ENCODE measurements at regions of chr11 and their contacts with region 1.

Region 1: GRCh38 chr11:59135648-59136461 is 6.8 kb upstream of the FAM111A start:
- DNase-seq: peak; percentile 90
- ATAC-seq: peak; percentile 99
- H3K4me3 ChIP-seq: peak overlapping the region in 1 of 5 experiments; percentile 18
- H3K4me3 Mint-ChIP-seq: peak overlapping the region; percentile 62
- H3K27ac ChIP-seq: no peak overlapping the region
- H3K27ac Mint-ChIP-seq: peak overlapping the region; percentile 88
- H3K4me1 ChIP-seq: peaks cover 14 to 23% of the 10 kb centered on the region in 2 donors
- H3K4me1 Mint-ChIP-seq: peaks cover 31% of the 10 kb centered on the region
- H3K27me3 ChIP-seq: no peaks in the 10 kb centered on the region
- H3K27me3 Mint-ChIP-seq: no peaks in the 10 kb centered on the region
- CTCF ChIP-seq: peak; percentile 98

Region 2: GRCh38 chr11:58567889-58568512 is 567.9 kb before region 1 on chr11:
- CTCF ChIA-PET with region 1: interaction called, 23 read pairs
- POLR2A ChIA-PET with region 1: no interaction called
- intact Hi-C with region 1: no loop called
- DNase-seq: peak; percentile 87
- ATAC-seq: peak; percentile 98
- H3K4me3 ChIP-seq: no peak overlapping the region
- H3K4me3 Mint-ChIP-seq: peak overlapping the region; percentile 1
- H3K27ac ChIP-seq: no peak overlapping the region
- H3K27ac Mint-ChIP-seq: peak overlapping the region; percentile 5
- H3K4me1 ChIP-seq: peaks cover 19 to 21% of the 10 kb centered on the region in 2 donors
- H3K4me1 Mint-ChIP-seq: peaks cover 42% of the 10 kb centered on the region
- H3K27me3 ChIP-seq: no peaks in the 10 kb centered on the region
- H3K27me3 Mint-ChIP-seq: no peaks in the 10 kb centered on the region
- CTCF ChIP-seq: peak; percentile 82

Region 3: DNA sequence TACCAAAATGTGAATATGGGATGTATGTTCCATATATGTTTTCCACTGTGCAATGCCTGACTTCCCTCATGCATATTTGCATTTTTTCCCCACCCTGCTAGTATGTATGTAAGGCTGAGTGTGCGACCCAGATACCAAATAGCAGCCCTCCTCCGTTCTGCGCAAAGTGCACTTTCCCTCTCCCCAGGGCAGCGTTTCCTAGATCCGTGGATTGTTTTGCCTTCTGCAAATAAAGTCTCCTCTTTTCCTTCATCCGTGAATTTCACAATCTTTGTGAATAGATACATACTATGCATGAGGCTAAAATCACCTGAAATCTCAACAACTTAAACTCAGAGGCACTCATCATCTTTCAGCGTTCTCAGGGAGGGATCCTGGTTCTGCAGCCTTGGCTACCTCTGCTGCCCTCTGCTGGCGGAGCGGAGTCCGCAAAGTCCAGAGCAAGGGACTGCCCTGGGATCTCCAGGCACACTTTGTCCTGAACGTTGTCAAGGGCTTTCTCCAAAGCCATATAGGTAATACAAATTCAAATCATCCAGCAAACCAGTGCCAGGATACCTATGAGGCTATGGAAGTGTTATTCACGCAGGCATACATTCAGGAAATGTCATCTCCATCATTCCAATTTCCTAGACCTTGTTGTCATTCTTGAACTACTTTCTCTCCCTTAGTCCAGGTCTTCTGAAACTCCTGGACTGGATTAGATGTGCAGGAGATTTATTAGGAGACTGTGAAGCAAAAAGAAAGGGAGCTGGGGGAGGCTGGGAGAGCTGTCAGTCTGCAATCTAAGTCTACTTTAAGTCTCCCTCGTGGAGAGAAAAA is 460.3 kb before region 1 on chr11:
- CTCF ChIA-PET with region 1: interaction called, 22 read pairs
- POLR2A ChIA-PET with region 1: no interaction called
- intact Hi-C with region 1: loop called (anchors 1 kb)
- DNase-seq: peak; percentile 74
- ATAC-seq: peak; percentile 73
- H3K4me3 ChIP-seq: no peak overlapping the region
- H3K4me3 Mint-ChIP-seq: no peak overlapping the region
- H3K27ac ChIP-seq: no peak overlapping the region
- H3K27ac Mint-ChIP-seq: no peak overlapping the region
- H3K4me1 ChIP-seq: no peaks in the 10 kb centered on the region
- H3K4me1 Mint-ChIP-seq: no peaks in the 10 kb centered on the region
- H3K27me3 ChIP-seq: peaks cover 0 to 16% (median 4%) of the 10 kb centered on the region in 4 experiments
- H3K27me3 Mint-ChIP-seq: peaks cover 12% of the 10 kb centered on the region
- CTCF ChIP-seq: peak; percentile 96

Region 4: DNA sequence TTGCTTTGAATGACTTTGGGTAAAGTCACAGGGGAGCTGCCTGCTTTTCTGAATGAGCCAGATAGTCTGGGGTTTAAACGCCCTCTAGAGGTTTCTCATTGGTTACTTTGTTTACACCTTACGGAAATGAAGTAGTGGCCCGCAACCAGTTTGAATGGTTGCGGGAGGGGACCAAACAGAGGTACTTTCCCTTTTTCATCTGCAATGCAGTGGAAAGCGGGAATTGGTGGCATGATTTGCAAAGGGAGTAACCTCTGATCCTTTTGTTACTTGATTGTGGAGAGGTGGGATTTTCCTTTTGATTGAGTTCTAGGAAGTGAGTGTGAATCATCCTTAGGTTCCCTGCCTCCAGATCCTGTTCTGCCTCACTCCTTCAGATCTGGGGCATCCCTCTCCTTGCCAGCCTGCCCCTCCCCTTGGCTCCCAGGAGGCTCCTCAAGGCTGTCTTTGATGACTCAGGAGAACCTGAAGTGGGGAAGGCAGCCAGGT is 212.5 kb before region 1 on chr11:
- CTCF ChIA-PET with region 1: interaction called, 11 read pairs
- POLR2A ChIA-PET with region 1: no interaction called
- intact Hi-C with region 1: no loop called
- DNase-seq: peak; percentile 51
- ATAC-seq: peak; percentile 76
- H3K4me3 ChIP-seq: no peak overlapping the region
- H3K4me3 Mint-ChIP-seq: peak overlapping the region; percentile 38
- H3K27ac ChIP-seq: no peak overlapping the region
- H3K27ac Mint-ChIP-seq: no peak overlapping the region
- H3K4me1 ChIP-seq: peaks cover 18 to 19% of the 10 kb centered on the region in 2 donors
- H3K4me1 Mint-ChIP-seq: peaks cover 22% of the 10 kb centered on the region
- H3K27me3 ChIP-seq: peaks cover 0 to 6% (median 3%) of the 10 kb centered on the region in 4 experiments
- H3K27me3 Mint-ChIP-seq: peaks cover 8% of the 10 kb centered on the region
- CTCF ChIP-seq: peak; percentile 52

Region 5: DNA sequence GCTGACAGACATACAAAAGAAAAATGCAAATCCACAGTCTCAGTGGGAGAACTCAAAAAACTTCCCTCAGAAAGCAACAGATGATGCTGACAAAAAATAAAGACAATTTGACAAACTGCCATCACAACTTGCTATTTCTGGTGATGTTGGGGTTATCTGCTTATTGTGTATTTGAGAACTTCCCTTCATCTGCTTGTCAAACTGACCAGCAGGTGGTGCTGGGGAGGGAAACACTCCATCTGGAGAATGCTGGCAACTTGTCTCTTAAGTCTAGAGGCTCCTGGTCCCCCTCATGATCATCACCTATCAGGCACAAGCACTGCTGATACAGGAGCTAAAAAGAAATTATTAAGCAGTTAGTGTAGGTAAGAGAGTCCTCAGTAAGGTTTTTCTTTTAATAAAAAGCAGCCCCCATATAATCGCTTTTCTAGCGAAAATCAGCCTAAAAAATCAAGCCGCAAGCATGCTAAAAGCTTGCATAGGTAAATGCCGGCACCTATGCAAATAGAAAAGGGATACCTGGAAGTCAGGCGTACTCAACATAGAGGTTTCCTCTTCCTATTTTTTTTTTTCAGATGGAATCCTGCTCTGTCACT is 38.6 kb before region 1 on chr11:
- CTCF ChIA-PET with region 1: interaction called, 79 read pairs
- POLR2A ChIA-PET with region 1: interaction called, 5 read pairs
- intact Hi-C with region 1: loop called (anchors 1 kb)
- DNase-seq: peak; percentile 77
- ATAC-seq: peak; percentile 29
- H3K4me3 ChIP-seq: peak overlapping the region in 4 of 5 experiments; percentile 8 to 37 (median 34)
- H3K4me3 Mint-ChIP-seq: peak overlapping the region; percentile 64
- H3K27ac ChIP-seq: peak overlapping the region; percentile 65 to 85
- H3K27ac Mint-ChIP-seq: peak overlapping the region; percentile 91
- H3K4me1 ChIP-seq: peaks cover 77 to 89% of the 10 kb centered on the region in 2 donors
- H3K4me1 Mint-ChIP-seq: peaks cover 86% of the 10 kb centered on the region
- H3K27me3 ChIP-seq: no peaks in the 10 kb centered on the region
- H3K27me3 Mint-ChIP-seq: no peaks in the 10 kb centered on the region
- CTCF ChIP-seq: peak; percentile 72

Region 6: DNA sequence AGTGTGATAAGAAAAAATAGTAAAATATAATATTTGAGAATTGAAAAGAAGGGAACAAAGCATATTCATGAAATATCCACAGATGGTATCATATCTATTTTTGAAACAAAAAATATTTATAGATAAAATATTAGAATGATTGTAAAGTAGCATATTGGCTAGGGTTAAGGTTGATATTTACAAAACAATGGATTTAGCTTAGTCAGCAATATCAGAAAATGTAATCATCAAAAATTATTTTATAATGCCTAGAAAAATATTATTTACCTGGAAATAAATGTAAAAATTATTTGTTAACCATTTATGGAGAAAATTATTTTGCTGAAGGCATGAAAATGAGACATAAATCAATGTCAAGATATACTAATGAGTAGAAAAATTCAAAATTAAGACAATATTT is 16.0 kb before region 1 on chr11:
- CTCF ChIA-PET with region 1: interaction called, 10 read pairs
- POLR2A ChIA-PET with region 1: no interaction called
- intact Hi-C with region 1: no loop called
- DNase-seq: no peak
- ATAC-seq: no peak
- H3K4me3 ChIP-seq: no peak overlapping the region
- H3K4me3 Mint-ChIP-seq: no peak overlapping the region
- H3K27ac ChIP-seq: no peak overlapping the region
- H3K27ac Mint-ChIP-seq: no peak overlapping the region
- H3K4me1 ChIP-seq: peaks cover 0 to 6% of the 10 kb centered on the region in 2 donors
- H3K4me1 Mint-ChIP-seq: peaks cover 12% of the 10 kb centered on the region
- H3K27me3 ChIP-seq: no peaks in the 10 kb centered on the region
- H3K27me3 Mint-ChIP-seq: no peaks in the 10 kb centered on the region
- CTCF ChIP-seq: no peak

Region 7: GRCh38 chr11:59417023-59417422 is 281.2 kb after region 1 on chr11:
- CTCF ChIA-PET with region 1: no interaction called
- POLR2A ChIA-PET with region 1: no interaction called
- intact Hi-C with region 1: no loop called
- DNase-seq: peak; percentile 46
- ATAC-seq: peak; percentile 67
- H3K4me3 ChIP-seq: peak overlapping the region in 2 of 5 experiments; percentile 25 to 31
- H3K4me3 Mint-ChIP-seq: peak overlapping the region; percentile 68
- H3K27ac ChIP-seq: peak overlapping the region; percentile 16 to 62
- H3K27ac Mint-ChIP-seq: peak overlapping the region; percentile 81
- H3K4me1 ChIP-seq: peaks cover 44% of the 10 kb centered on the region in 2 donors
- H3K4me1 Mint-ChIP-seq: peaks cover 38% of the 10 kb centered on the region
- H3K27me3 ChIP-seq: no peaks in the 10 kb centered on the region
- H3K27me3 Mint-ChIP-seq: no peaks in the 10 kb centered on the region
- CTCF ChIP-seq: no peak

Measured in B cell (primary cell).